Activated T-helper 1 cell treated with anti-CD3 and anti-CD28 coated beads, Interleukin-12 subunit alpha, Interleukin-12 subunit beta, Interleukin-2, Interleukin-4 antibody, amounts not matched to agents 30 ng/mL and 10 ng/mL and 1 ng/mL, durations not matched to agents 14 hours and 24 hours and 36 hours (primary cell): ENCODE measurements at regions of chr11 and their contacts with region 1.

Region 1: GRCh38 chr11:103091801-103092524 is at the start of gene DCUN1D5:
- DNase-seq: peak; percentile 94
- H3K4me3 Mint-ChIP-seq: peak within 1 kb of the TSS; percentile 94
- H3K27ac Mint-ChIP-seq: peak within 1 kb of the TSS; percentile 95
- H3K4me1 Mint-ChIP-seq: peaks cover 37% of the 10 kb centered on the region
- H3K27me3 Mint-ChIP-seq: peaks cover 22% of the 10 kb centered on the region
- total RNA-seq, gene DCUN1D5: 73.9 and 78.9 TPM in 2 replicates

Region 2: GRCh38 chr11:103070142-103070541 is 21.8 kb before region 1 on chr11:
- intact Hi-C with region 1: loop called (anchors 2 kb)
- DNase-seq: no peak
- H3K4me3 Mint-ChIP-seq: no peak overlapping the region
- H3K27ac Mint-ChIP-seq: peak overlapping the region; percentile 20
- H3K4me1 Mint-ChIP-seq: peaks cover 37% of the 10 kb centered on the region
- H3K27me3 Mint-ChIP-seq: no peaks in the 10 kb centered on the region

Region 3: DNA sequence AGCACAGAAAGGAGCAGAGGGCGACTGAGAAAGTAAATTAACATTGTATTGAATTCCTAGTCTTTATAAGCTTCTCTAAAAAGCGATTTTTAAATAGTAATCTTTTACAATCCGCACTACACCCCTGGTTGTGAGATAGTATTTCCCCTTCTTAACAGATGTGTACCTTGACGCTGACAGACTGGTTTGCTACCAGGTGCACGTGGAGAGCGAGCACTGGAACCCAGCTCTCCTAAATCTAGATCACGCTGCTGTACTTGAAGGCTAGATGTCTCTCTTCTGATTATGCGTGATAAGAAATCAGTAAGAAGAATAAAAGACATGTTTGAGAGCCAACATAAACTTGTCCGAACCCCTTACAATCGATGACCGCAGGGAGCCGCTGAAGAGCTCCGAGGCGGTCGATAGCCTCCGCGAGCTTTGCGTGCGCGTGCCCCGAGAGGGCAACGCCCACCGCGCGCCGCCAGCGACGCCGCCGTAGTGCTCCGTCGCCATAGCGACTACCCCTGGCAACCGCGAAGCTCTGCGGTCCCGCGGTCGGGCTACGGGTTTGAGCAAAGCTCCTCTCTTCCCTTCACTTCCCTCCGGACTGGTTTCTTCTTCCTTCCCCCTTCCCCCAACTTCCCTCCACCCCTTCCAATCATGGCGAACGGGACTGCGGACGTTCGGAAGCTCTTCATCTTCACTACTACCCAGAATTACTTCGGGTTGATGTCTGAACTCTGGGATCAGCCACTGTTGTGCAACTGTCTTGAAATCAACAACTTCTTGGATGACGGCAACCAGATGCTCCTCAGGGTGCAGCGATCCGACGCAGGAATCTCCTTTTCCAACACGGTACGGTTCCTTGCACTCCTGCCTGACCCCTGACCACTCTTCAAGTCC is 17.2 kb after region 1 on chr11 and contains the start of gene DYNC2H1:
- intact Hi-C with region 1: loop called (anchors 1 kb)
- DNase-seq: peak; percentile 87
- H3K4me3 Mint-ChIP-seq: peak within 1 kb of the TSS; percentile 92
- H3K27ac Mint-ChIP-seq: peak within 1 kb of the TSS; percentile 90
- H3K4me1 Mint-ChIP-seq: peaks cover 8% of the 10 kb centered on the region
- H3K27me3 Mint-ChIP-seq: peaks cover 35% of the 10 kb centered on the region
- total RNA-seq, gene DYNC2H1: 0.91 and 1.1 TPM in 2 replicates